Activated CD4-positive, alpha-beta memory T cell treated with anti-CD3 and anti-CD28 coated beads, Interleukin-2, amount 10 ng/mL, durations not matched to agents 7 days and 5 days (primary cell): ENCODE measurements at regions of chr12 and their contacts with region 1.

Region 1: DNA sequence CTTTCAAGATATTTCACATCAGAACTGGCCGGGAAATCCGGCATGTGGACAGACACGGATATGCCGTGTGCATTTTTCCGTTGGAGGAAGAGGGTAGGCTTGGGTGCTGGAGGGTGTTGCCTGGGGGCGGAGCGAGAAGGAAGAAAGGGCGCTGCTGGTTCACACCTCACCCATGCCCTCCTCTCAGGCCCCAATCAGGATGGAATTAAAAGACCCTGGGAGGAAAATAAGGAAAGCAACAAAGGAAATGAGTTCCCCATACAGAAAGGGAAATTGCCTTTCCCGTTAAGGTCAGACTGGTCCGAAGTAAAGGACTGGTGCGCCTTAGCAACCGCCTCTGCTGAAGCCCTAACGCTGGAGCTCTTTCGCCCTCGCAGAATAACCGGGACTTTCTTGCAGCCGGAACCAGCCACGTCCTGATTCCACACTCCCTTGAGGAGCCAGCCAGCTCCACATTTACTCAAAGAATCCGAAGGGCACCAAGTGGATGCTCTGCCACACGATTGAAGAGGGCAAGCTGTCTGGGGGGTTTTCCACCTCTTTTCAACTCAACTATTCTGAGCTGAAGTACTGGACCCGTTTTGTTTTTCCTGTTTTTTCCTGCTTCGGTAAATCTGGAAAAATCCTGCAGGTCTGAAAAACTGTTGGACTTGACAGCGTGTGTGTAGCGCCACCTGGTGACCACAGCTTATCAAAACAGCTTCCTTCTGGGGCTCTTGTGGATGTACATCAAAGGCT is 37.7 kb upstream of the BCL2L14 start:
- DNase-seq: peak; percentile 77
- H3K4me3 Mint-ChIP-seq: peak overlapping the region; percentile 62
- H3K27ac Mint-ChIP-seq: peak overlapping the region; percentile 69
- H3K4me1 Mint-ChIP-seq: peaks cover 25% of the 10 kb centered on the region
- H3K27me3 Mint-ChIP-seq: no peaks in the 10 kb centered on the region

Region 2: GRCh38 chr12:11553871-11554533 is 479.0 kb before region 1 on chr12:
- CTCF ChIA-PET with region 1: interaction called, 17 read pairs
- POLR2A ChIA-PET with region 1: interaction called, 3 read pairs
- DNase-seq: peak; percentile 61
- H3K4me3 Mint-ChIP-seq: no peak overlapping the region
- H3K27ac Mint-ChIP-seq: no peak overlapping the region
- H3K4me1 Mint-ChIP-seq: peaks cover 20% of the 10 kb centered on the region
- H3K27me3 Mint-ChIP-seq: peaks cover 25% of the 10 kb centered on the region

Region 3: GRCh38 chr12:11581179-11581755 is 451.8 kb before region 1 on chr12:
- CTCF ChIA-PET with region 1: interaction called, 234 read pairs
- POLR2A ChIA-PET with region 1: interaction called, 14 read pairs
- DNase-seq: peak; percentile 66
- H3K4me3 Mint-ChIP-seq: no peak overlapping the region
- H3K27ac Mint-ChIP-seq: no peak overlapping the region
- H3K4me1 Mint-ChIP-seq: peaks cover 16% of the 10 kb centered on the region
- H3K27me3 Mint-ChIP-seq: peaks cover 8% of the 10 kb centered on the region

Region 4: DNA sequence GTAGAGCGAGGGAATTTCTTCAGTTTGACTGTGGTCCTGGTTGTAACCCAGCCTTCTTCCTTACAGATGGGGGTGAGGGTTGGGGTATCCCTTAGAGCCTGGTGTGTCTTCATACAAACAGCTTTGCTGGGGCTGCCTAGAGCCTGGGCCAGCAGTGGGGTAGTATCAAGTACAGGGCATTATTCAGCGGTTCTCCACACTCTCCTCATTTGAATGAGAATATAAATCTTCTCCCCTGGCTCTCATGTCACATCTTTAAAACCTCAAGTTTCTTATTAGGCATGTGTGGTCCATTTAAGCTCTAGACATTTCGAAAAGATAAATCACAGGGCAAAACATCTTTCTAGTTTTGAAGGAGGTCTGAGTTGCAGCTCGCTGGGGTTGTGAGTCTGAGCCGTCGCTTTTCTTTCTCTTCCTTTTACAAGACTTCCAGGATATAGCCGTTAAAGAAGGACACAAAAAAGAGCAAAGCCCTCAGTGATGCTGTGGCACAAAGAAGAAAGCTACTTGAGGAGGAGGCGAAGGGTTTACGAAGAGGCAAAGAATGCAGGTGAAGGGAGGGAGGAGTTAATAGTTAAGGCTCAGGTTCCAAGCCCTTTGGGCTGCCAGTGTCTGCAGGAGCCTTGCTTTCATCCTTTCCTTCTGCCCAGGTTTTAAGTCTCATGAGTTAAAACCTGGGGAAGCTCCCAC is 289.5 kb before region 1 on chr12:
- CTCF ChIA-PET with region 1: no interaction called
- POLR2A ChIA-PET with region 1: no interaction called
- DNase-seq: no peak
- H3K4me3 Mint-ChIP-seq: no peak overlapping the region
- H3K27ac Mint-ChIP-seq: no peak overlapping the region
- H3K4me1 Mint-ChIP-seq: peaks cover 4% of the 10 kb centered on the region
- H3K27me3 Mint-ChIP-seq: no peaks in the 10 kb centered on the region

Region 5: GRCh38 chr12:11891754-11892386 is 141.2 kb before region 1 on chr12:
- CTCF ChIA-PET with region 1: interaction called, 10 read pairs
- POLR2A ChIA-PET with region 1: no interaction called
- DNase-seq: no peak
- H3K4me3 Mint-ChIP-seq: no peak overlapping the region
- H3K27ac Mint-ChIP-seq: no peak overlapping the region
- H3K4me1 Mint-ChIP-seq: peaks cover 15% of the 10 kb centered on the region
- H3K27me3 Mint-ChIP-seq: no peaks in the 10 kb centered on the region

Region 6: GRCh38 chr12:11923067-11923466 is 110.0 kb before region 1 on chr12:
- CTCF ChIA-PET with region 1: no interaction called
- POLR2A ChIA-PET with region 1: no interaction called
- DNase-seq: no peak
- H3K4me3 Mint-ChIP-seq: no peak overlapping the region
- H3K27ac Mint-ChIP-seq: no peak overlapping the region
- H3K4me1 Mint-ChIP-seq: peaks cover 8% of the 10 kb centered on the region
- H3K27me3 Mint-ChIP-seq: peaks cover 7% of the 10 kb centered on the region

Region 7: DNA sequence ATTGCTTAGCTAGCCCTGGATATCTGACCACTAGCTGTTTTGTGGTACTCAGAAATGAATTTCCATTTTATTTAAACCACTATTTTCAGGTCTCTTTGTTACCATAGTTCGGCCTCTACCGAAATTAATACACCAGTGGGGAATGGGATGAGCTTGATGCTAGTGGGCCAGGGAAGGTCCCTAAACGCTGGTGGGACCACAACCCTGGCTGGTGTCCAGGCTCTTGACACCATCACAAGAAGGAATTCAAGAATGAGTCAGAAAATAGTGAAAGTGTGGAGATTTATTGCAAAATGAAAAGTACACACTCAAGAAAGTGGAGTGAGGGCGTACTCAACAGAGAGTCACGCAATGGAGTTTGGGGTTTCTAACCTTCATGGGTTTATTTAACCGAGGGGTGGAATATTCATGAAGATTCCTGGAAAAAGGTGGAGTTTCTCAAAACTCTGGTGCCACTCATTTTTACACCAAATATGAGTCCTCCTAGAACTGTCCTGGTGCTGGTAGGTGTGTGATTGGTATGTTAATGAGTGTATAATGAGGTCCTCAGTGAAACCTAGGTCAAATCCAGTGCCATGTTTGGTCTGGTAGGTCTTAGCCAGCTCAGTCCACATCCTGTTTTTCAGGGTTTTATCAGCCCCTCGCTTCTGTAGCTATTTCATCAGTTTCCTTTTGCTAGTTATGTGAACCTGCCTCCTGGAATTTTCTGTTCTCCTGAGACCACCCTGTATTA is 272.7 kb after region 1 on chr12:
- CTCF ChIA-PET with region 1: no interaction called
- POLR2A ChIA-PET with region 1: no interaction called
- DNase-seq: no peak
- H3K4me3 Mint-ChIP-seq: no peak overlapping the region
- H3K27ac Mint-ChIP-seq: no peak overlapping the region
- H3K4me1 Mint-ChIP-seq: peaks cover 4% of the 10 kb centered on the region
- H3K27me3 Mint-ChIP-seq: peaks cover 12% of the 10 kb centered on the region

Region 8: DNA sequence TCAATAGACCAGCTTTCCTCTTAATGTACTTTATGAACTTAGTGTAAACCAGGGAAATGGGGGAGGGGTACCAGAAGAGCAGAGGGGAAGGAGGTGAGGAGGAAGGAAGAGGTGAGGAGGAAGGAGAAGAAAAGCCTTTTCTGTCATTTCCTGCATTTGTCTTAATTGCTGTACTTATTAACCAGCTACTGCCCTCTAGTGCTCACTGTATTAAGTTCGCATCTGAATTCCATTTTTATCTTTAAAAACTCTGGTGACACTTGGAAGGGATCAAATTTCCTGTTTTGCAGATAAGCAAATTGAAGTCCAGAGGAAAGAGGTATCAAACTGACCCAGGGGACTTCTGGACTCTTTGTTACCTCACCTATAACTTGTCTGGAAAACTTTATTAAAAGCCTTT is 294.8 kb after region 1 on chr12:
- CTCF ChIA-PET with region 1: interaction called, 53 read pairs
- POLR2A ChIA-PET with region 1: no interaction called
- DNase-seq: no peak
- H3K4me3 Mint-ChIP-seq: no peak overlapping the region
- H3K27ac Mint-ChIP-seq: no peak overlapping the region
- H3K4me1 Mint-ChIP-seq: peaks cover 5% of the 10 kb centered on the region
- H3K27me3 Mint-ChIP-seq: peaks cover 15% of the 10 kb centered on the region